Motor neuron (in vitro differentiated cells): ENCODE measurements at regions of chr7 and their contacts with region 1.

Region 1: DNA sequence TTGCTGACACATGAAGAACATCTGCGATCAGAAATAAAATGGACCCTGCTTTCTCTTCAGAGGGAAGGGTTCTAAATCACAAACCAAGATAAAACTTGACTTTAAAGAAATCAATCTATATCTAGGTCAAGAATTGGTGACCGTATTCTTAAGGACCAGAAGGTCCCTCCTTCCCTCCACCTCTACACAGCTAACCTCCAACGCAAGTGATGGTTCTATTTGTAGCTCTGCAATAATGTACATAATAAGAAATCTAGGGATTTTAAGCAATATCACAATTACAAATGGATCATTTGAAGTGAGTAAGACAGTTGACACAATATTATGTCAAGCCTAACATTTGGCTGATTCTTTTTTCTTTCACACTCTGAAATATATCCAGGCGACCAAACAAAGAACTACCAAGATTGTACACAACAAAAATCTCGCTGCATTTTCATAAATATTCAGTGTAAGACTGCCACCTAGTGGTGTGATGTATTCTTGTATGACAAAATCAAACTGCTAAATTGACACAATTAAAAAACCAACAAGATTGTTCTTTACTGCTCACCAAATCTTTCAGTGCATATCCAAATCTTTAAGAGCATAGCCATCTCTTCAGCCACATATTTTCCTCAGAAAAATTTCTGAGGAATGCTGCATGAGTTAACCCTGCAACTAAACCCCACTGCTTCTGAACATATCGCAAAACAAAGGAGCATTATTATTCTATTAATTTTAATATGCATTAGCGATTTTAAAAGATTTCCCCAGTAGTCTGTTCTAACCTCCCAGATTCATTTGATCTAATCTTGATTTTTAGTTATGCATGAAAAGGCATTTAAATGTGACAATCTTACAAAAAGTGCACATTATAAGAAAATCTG is 44.5 kb downstream of the ICA1 start:
- ATAC-seq: peak in 3 of 8 experiments; percentile 14 to 71 (median 19)
- H3K4me3 ChIP-seq: no peak overlapping the region
- H3K27ac ChIP-seq: no peak overlapping the region
- H3K4me1 ChIP-seq: peaks cover 63 to 65% of the 10 kb centered on the region in 2 donors

Region 2: GRCh38 chr7:7438851-7439250 is 778.6 kb before region 1 on chr7:
- in situ Hi-C with region 1: loop called in 1 of 9 experiments (anchors 25 kb)
- ATAC-seq: peak; percentile 49 to 100 (median 70)
- H3K4me3 ChIP-seq: no peak overlapping the region
- H3K27ac ChIP-seq: no peak overlapping the region
- H3K4me1 ChIP-seq: no peaks in the 10 kb centered on the region

Region 3: DNA sequence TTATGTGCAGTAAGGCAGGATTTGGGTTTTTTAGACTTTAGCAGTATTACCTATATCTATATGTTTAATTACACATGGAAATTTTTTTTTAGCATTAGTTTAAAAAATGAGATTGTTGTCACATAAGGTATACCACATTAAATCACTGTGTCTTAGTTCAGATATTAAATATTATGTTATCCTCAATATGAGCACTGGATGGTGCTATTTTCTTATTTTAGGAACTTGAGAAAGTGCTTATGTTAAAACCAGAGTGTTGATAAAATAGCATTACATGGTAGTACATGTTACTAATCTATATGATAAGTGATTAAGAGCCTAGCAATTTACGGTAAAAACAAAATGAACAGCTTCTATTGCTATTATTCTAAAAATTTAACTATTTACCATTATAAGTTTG is 622.0 kb before region 1 on chr7:
- in situ Hi-C with region 1: loop called in 1 of 9 experiments (anchors 25 kb)
- ATAC-seq: peak in 2 of 8 experiments; percentile 34 to 46
- H3K4me3 ChIP-seq: no peak overlapping the region
- H3K27ac ChIP-seq: no peak overlapping the region
- H3K4me1 ChIP-seq: no peaks in the 10 kb centered on the region

Region 4: DNA sequence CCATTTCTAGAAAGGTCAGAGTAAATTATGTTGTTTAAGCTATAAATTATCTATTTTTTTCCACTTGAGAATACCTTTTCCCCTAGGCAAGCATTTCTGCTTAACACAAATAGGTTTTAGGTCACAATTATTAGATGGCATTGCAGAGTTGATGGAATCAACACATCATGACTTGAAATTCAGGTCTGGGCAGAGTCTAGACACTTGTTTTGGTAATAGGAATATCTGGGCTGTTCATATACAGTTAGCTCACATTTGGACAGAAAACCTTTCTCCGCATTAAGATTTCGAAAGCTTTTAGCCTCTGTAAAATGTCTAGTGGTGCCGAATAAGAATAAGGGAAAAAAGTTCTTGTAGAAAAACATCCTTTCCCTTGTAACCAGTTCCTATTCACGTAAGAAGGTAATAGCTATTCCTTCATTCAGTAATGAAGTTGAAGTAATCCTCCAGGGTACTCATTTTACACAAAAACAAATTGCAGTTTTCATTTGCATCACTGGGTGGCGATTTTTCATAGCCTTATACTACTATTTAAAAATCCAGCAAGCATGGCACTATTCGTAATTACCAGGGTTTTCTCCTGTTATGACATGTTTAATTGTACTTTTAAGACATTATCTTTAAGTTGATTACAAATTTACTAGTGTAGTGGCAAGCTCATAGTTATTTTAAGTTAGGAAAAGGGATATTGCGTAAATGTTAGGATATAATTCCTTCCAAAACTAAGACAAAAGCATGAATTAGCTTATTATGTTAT is 536.1 kb before region 1 on chr7:
- in situ Hi-C with region 1: loop called in 1 of 9 experiments (anchors 25 kb)
- ATAC-seq: peak; percentile 63 to 87 (median 72)
- H3K4me3 ChIP-seq: no peak overlapping the region
- H3K27ac ChIP-seq: no peak overlapping the region
- H3K4me1 ChIP-seq: no peaks in the 10 kb centered on the region

Region 5: DNA sequence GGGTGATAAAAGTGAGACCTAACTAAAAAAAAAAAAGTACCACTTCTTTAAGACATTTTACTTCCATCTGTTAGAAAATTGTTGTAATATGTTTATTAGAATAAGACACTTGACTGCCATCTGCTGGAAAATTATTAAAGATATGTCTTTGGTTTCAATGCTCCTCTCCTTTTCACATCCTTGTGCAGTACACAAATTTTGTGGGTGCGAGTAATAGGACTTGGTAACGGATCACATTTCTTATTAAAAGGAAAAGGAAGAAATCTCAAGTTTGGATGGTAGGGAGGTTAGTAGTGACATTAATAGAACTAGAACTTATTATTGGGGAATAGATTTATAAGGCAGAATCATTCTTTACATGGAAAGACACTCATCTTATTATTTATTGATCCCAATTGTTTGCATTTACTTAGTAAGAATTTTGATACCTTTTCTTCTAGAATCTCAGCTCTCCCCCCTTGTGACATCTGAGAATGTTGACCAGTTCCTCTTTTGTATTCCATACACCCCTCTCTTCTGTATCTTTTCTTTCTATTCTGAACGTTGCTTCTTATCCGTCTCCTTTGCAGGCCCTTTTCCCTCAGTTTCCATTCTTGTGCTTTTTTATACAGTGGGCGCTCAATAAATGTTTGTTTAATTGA is 456.0 kb before region 1 on chr7:
- in situ Hi-C with region 1: loop called in 2 of 9 experiments (anchors 25 kb)
- ATAC-seq: no peak
- H3K4me3 ChIP-seq: no peak overlapping the region
- H3K27ac ChIP-seq: no peak overlapping the region
- H3K4me1 ChIP-seq: peaks cover 0 to 5% of the 10 kb centered on the region in 2 donors